ENCODE measurements at regions of chr1 and their contacts with region 1.

Region 1: GRCh38 chr1:229440851-229441537 is 7.1 kb upstream of the ACTA1 start:
- DNase-seq: peak; percentile 44
- H3K4me3 Mint-ChIP-seq: no peak overlapping the region
- H3K27ac Mint-ChIP-seq: peak overlapping the region; percentile 68
- H3K4me1 Mint-ChIP-seq: peaks cover 28% of the 10 kb centered on the region
- H3K27me3 Mint-ChIP-seq: peaks cover 13% of the 10 kb centered on the region

Region 2: DNA sequence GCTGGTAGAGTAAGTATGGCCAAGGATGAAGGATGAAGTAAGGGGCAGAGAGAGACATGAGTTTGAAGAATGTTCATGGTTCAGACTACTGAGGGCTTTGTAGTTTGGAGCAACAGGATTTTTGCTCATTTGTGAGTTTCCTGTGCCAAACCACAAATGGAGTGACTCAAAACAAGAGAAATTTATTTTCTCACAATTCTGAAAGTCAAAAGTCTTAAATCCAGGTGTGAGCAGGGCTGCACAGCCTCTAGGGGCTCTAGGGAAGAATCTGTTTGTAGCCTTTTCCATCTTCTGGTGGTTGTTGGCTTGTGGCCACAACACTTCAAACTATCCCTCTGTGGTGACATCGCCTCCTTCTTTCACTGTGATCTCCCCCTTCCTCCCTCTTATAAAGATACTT is 646.8 kb before region 1 on chr1:
- CTCF ChIA-PET with region 1: no interaction called
- intact Hi-C with region 1: loop called (anchors 1 kb)
- DNase-seq: peak; percentile 52
- H3K4me3 Mint-ChIP-seq: no peak overlapping the region
- H3K27ac Mint-ChIP-seq: no peak overlapping the region
- H3K4me1 Mint-ChIP-seq: peaks cover 6% of the 10 kb centered on the region
- H3K27me3 Mint-ChIP-seq: no peaks in the 10 kb centered on the region

Region 3: DNA sequence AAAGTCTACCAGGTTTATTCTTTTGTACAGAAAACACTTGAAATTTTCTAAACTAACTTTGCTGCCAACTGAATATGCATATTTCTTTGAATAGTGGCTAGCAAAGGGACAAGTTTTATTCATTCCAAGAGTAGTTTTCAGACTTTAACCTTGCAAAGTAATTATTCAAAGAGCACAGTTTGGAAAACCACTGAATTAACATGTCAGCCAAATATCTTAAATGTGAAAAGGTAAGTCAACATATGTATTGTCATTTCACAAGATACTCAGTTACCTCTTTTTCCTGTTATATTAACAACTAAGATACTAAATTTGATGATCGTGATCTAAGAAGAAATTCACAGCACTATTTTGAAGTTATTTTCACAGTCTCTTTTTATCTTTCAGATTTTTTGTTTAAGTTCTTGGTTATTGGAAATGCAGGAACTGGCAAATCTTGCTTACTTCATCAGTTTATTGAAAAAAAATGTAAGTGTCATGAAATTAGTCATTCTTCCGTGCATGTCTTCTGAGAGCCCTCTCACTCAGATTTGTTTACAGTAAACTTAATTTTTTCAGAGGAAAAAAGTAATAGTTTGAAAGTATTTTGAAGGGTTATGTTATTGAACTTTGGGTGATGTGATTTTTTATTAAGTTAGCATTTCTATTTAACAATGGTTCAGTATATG is 154.8 kb before region 1 on chr1:
- CTCF ChIA-PET with region 1: no interaction called
- intact Hi-C with region 1: loop called (anchors 1 kb)
- DNase-seq: no peak
- H3K4me3 Mint-ChIP-seq: no peak overlapping the region
- H3K27ac Mint-ChIP-seq: no peak overlapping the region
- H3K4me1 Mint-ChIP-seq: peaks cover 31% of the 10 kb centered on the region
- H3K27me3 Mint-ChIP-seq: no peaks in the 10 kb centered on the region

Region 4: DNA sequence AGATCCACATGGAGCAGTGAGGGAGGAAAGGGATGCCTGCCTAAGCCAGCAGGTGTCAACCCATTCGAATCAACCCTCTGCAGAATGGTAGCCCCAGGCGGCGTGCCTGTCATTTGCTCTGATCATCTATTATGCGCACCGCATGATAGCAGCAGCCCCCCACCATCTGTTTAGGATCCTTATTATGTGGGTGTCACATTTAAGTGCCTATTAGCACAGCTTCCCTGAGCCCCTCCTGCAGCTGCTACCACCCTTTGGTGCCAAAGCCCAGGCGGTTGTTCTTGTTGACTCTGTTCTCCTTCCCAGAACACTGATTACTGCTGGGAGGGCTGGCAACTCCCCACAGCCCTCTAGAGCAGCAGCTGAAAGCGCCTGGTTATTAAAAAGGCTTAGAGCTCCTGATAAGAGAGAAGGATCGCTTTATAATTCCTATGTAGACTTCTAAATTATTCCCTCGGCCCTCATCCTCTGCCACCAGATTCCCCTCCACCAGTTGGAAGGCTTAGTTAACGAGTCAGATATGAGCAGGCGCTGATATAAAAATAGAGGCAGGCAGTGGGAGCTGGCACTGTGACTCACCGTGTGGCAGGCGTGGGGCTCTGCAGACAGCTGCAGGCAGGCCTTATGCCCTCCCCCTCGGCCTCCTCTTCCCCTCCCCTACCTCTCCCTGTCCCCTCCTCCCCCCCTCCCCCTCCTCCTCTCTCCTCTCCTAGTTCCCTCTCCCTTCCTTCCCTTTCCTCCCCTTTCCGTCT is 30.1 kb before region 1 on chr1:
- CTCF ChIA-PET with region 1: no interaction called
- intact Hi-C with region 1: loop called (anchors 2 kb)
- DNase-seq: peak; percentile 45
- H3K4me3 Mint-ChIP-seq: no peak overlapping the region
- H3K27ac Mint-ChIP-seq: no peak overlapping the region
- H3K4me1 Mint-ChIP-seq: peaks cover 22% of the 10 kb centered on the region
- H3K27me3 Mint-ChIP-seq: peaks cover 52% of the 10 kb centered on the region

Region 5: GRCh38 chr1:229558571-229559335 is 117.8 kb after region 1 on chr1 and contains the start of gene ABCB10:
- CTCF ChIA-PET with region 1: no interaction called
- intact Hi-C with region 1: loop called (anchors 1 kb)
- DNase-seq: peak; percentile 92
- H3K4me3 Mint-ChIP-seq: peak within 1 kb of the TSS; percentile 88
- H3K27ac Mint-ChIP-seq: peak within 1 kb of the TSS; percentile 79
- H3K4me1 Mint-ChIP-seq: peaks cover 27% of the 10 kb centered on the region
- H3K27me3 Mint-ChIP-seq: no peaks in the 10 kb centered on the region
- total RNA-seq, gene ABCB10: 18.9 to 19.1 TPM

Region 6: DNA sequence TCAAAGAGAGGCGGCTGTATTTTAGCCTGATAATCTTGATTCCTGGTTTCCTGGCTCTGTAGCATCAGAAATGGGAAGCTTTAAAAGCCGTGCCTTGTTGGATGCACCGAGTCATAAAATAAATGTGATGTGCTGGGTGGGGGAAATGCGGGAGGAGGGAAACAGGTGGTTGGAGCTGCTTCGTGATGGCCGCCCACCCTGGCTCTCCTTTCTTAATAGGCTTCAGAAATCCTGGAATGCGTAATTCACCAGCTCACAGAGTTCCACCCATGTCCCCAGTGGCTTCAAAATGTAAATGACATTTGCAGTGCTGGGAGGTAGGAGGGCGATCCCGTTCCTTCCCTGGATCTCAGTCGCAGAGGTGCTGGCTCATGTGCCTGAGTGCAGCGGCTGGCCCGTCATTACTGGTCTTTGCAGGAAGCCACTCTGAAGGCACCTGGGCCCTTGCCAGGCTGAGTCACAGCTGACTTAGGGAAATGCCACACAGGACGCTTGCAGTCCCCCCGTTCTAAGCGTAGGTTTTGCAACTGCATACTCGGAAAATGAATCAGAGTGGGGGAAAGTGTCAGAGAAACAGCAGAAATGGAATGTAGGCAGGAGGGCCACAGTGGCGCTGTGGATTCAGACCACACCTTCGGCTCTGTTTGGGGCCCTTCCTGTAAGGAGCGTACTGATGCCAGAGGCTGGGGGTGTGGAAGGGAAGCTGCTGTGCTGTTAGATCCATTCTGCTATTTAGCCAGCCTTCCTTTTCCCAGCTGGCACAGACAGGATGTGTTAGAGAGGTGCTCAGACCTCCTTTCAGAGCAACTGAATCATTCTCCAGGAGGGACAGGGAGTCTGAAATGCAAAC is 663.6 kb after region 1 on chr1:
- CTCF ChIA-PET with region 1: no interaction called
- intact Hi-C with region 1: loop called (anchors 1 kb)
- DNase-seq: peak; percentile 97
- H3K4me3 Mint-ChIP-seq: peak overlapping the region; percentile 56
- H3K27ac Mint-ChIP-seq: peak overlapping the region; percentile 89
- H3K4me1 Mint-ChIP-seq: peaks cover 86% of the 10 kb centered on the region
- H3K27me3 Mint-ChIP-seq: no peaks in the 10 kb centered on the region

Measured in activated naive CD4-positive, alpha-beta T cell treated with anti-CD3 and anti-CD28 coated beads for 36 hours (primary cell).